Activated B cell treated with CpG ODN at 0.5 μM for 24 hours (primary cell): ENCODE measurements at regions of chr9 and their contacts with region 1.

Region 1: DNA sequence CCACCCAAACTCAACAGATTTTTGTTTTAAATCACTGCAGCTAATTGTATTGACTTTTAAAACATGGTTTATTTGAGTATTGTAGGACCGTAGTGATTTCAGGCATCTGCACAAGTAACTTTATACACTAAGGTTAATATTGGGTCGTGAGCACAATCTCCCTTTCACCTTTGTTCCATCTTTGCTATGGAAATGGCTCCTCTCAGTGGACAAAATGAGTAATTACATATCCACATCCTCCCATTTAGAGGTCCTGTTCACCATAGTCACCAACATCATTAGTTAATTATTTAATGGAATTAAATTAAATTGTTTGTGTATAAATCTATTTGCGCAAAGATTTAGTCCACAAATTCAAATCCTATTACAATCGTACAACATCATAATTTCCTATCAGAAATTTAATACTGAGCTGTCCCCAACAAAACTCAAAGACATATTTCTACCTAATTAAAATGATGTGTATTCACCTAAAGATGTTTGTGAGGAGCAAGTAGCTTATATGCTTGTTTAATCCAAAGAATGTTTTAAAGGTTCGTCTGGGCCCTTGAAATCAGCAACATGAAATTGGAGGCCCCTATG is 173.0 kb upstream of the DAPK1 start:
- DNase-seq: no peak
- ATAC-seq: no peak
- H3K4me3 Mint-ChIP-seq: no peak overlapping the region
- H3K27ac Mint-ChIP-seq: no peak overlapping the region
- H3K4me1 Mint-ChIP-seq: no peaks in the 10 kb centered on the region
- H3K27me3 Mint-ChIP-seq: peaks cover 2% of the 10 kb centered on the region
- CTCF ChIP-seq: peak; percentile 22

Region 2: DNA sequence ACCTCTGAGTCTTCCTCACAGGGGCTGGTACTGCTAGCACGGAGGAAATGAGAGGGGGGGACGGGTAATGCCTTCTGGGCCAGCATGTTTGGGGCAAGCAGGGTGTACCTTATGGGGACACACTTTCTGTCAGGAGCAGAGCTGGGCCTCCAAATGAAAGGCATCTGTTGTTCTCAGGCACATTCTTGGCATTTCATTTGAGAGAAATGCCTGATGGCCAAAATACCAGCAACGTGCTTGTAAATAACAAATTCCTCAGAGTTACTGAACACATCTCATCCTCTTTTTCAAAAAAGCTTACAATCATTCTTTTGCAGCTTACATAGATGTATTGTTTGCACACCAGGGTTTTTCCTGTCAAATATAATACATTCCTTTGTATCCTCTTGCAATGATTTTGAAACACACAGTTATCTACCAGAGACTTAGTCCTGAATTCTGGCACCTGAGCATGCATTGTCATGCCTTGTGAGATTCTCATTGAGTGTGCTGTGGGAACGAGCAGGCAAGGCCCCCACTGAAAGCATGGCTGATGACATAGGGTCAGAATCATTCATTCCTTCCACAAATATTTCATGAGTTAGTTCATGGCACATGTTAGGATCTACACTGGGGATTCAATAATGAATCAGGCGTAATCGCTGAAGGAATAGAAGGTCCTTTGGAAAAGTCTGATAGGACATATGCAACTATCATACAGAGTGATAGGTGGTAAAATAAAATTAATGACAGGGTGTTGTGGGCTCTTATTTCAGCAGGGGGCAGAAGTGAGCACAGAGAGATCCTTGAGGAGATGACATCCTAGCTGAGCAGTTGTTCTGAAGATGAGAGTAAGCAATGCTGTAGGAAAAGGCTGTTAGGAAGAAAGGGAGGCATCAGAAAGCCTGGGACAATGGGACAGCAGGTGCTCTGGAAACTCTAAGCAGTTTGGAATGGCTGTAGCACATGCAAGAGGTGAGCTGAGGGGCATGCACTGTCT is 709.5 kb before region 1 on chr9:
- CTCF ChIA-PET with region 1: no interaction called
- POLR2A ChIA-PET with region 1: no interaction called
- intact Hi-C with region 1: loop called (anchors 5 kb)
- DNase-seq: no peak
- ATAC-seq: no peak
- H3K4me3 Mint-ChIP-seq: no peak overlapping the region
- H3K27ac Mint-ChIP-seq: no peak overlapping the region
- H3K4me1 Mint-ChIP-seq: no peaks in the 10 kb centered on the region
- H3K27me3 Mint-ChIP-seq: no peaks in the 10 kb centered on the region
- CTCF ChIP-seq: no peak

Region 3: DNA sequence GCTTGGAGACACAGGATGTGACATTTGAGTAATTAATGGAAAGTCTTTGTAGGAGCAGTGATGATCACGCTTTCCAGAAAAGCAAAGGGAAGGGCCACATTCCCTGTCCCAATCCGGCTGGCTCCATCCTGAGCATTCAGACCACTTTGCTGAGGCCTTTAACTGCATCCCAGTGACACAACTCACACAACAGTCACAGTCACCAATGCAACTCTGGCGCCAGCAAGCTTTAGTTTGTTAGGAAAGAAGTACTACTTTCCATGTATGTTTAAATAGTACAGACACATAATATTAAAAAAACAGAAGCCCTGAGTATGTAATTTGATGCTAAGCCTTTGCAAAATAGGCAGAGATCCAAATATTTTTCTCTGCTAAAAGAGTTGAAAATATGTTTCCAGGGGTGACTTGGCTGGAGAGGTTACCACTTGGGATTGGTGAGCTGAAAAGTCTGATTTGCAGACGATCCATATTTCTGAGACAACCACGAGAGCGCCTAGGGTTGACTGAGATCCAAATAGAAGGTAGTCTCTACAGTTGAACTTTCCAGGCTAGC is 345.7 kb before region 1 on chr9:
- CTCF ChIA-PET with region 1: no interaction called
- POLR2A ChIA-PET with region 1: no interaction called
- intact Hi-C with region 1: no loop called
- DNase-seq: no peak
- ATAC-seq: no peak
- H3K4me3 Mint-ChIP-seq: no peak overlapping the region
- H3K27ac Mint-ChIP-seq: no peak overlapping the region
- H3K4me1 Mint-ChIP-seq: no peaks in the 10 kb centered on the region
- H3K27me3 Mint-ChIP-seq: peaks cover 4% of the 10 kb centered on the region
- CTCF ChIP-seq: no peak